AG04449 (cell line): ENCODE measurements at regions of chr2 and their contacts with region 1.

Region 1: GRCh38 chr2:209577376-209578357 is 153.8 kb downstream of the MAP2 start:
- DNase-seq: no peak
- H3K4me3 ChIP-seq: no peak overlapping the region
- CTCF ChIP-seq: no peak

Region 2: DNA sequence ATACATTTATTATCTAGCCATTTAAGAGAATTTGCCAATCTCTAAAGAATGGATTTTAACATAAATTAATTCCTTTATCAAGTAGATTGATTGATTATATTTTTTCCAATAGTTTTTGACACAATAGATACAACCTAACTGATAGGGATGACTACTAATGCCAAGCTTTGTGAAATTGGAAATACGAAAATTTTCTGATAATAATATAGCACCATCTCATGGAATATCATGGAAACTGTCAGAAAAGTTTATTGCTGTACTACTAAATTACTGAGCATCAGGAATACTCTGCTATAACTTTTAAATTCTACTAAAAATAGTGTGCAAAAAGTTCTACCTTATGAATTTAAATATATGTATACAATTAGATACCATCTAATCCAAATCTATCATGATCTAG is 255.6 kb before region 1 on chr2:
- CTCF ChIA-PET with region 1: no interaction called
- POLR2A ChIA-PET with region 1: no interaction called
- DNase-seq: no peak
- H3K4me3 ChIP-seq: no peak overlapping the region
- CTCF ChIP-seq: no peak

Region 3: GRCh38 chr2:209593930-209594329 is 16.3 kb after region 1 on chr2:
- CTCF ChIA-PET with region 1: interaction called, 16 read pairs
- POLR2A ChIA-PET with region 1: no interaction called
- DNase-seq: no peak
- H3K4me3 ChIP-seq: no peak overlapping the region
- CTCF ChIP-seq: no peak